ENCODE measurements at regions of chr21 and their contacts with region 1.

Region 1: DNA sequence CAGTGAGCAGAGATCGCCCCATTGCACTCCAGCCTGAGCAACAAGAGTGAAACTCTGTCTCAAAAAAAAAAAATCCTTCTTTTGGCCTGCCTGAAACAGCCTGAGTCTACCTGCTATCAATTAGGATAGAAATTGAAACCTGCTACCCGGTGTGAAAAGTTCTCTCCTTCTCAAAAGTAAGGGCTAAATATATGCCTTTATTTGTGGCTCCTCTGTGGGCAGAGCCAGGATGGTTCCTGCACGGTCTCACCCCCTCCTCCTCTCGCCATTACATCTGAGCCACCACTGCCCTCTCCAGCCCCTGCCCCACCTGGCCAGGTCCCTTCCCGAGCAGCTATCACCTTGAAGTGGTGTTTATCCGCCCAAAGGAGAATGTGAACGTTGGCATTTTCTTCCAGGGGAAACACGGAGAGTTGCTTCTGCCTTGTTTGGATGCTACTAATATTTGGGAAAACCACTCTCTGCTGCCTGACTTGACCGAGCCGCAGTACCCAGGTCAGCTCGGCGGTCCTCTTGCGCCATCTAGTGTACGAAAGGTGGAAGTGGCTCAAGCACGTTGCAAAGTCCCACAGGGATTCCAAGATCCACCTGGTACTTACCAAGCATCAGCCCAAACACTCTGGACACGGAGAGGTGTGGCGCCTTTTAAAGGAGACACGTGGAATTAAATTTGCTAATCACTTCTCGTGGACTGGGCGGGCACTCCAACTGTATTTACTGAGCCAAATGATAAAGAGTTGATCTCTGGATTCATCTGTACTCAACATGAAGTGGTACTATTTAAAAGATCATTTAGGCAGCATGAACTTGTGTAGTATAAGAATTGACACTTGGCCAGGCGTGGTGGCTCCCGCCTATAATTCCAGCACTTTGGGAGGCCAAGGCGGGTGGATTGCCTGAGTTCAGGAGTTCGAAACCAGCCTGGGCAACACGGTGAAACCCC is 31.9 kb downstream of the SETD4 start:
- DNase-seq: peak; percentile 51 to 65 (median 57)
- H3K4me3 ChIP-seq: no peak overlapping the region
- H3K4me3 Mint-ChIP-seq: peak overlapping the region in 1 of 8 donors; percentile 9
- H3K27ac ChIP-seq: no peak overlapping the region
- H3K27ac Mint-ChIP-seq: peak overlapping the region in 2 of 7 donors; percentile 4 to 30
- H3K4me1 ChIP-seq: peaks cover 3% of the 10 kb centered on the region
- H3K4me1 Mint-ChIP-seq: peaks cover 4 to 7% (median 5%) of the 10 kb centered on the region in 4 donors
- H3K27me3 ChIP-seq: no peaks in the 10 kb centered on the region
- H3K27me3 Mint-ChIP-seq: no peaks in the 10 kb centered on the region

Region 2: GRCh38 chr21:34688145-34688544 is 1340.3 kb before region 1 on chr21:
- CTCF ChIA-PET with region 1: interaction called, 34 read pairs
- POLR2A ChIA-PET with region 1: no interaction called
- intact Hi-C with region 1: no loop called
- DNase-seq: peak in 1 of 5 donors; percentile 47
- H3K4me3 ChIP-seq: no peak overlapping the region
- H3K4me3 Mint-ChIP-seq: no peak overlapping the region
- H3K27ac ChIP-seq: no peak overlapping the region
- H3K27ac Mint-ChIP-seq: no peak overlapping the region
- H3K4me1 ChIP-seq: no peaks in the 10 kb centered on the region
- H3K4me1 Mint-ChIP-seq: no peaks in the 10 kb centered on the region
- H3K27me3 ChIP-seq: peaks cover 3% of the 10 kb centered on the region
- H3K27me3 Mint-ChIP-seq: peaks cover 14 to 34% of the 10 kb centered on the region in 2 donors

Region 3: GRCh38 chr21:34693192-34693810 is 1335.1 kb before region 1 on chr21:
- CTCF ChIA-PET with region 1: interaction called, 34 read pairs
- POLR2A ChIA-PET with region 1: no interaction called
- intact Hi-C with region 1: no loop called
- DNase-seq: peak in 4 of 5 donors; percentile 42 to 57 (median 50)
- H3K4me3 ChIP-seq: no peak overlapping the region
- H3K4me3 Mint-ChIP-seq: no peak overlapping the region
- H3K27ac ChIP-seq: no peak overlapping the region
- H3K27ac Mint-ChIP-seq: no peak overlapping the region
- H3K4me1 ChIP-seq: no peaks in the 10 kb centered on the region
- H3K4me1 Mint-ChIP-seq: peaks cover 0 to 4% (median 0%) of the 10 kb centered on the region in 4 donors
- H3K27me3 ChIP-seq: no peaks in the 10 kb centered on the region
- H3K27me3 Mint-ChIP-seq: peaks cover 13 to 27% of the 10 kb centered on the region in 2 donors

Region 4: DNA sequence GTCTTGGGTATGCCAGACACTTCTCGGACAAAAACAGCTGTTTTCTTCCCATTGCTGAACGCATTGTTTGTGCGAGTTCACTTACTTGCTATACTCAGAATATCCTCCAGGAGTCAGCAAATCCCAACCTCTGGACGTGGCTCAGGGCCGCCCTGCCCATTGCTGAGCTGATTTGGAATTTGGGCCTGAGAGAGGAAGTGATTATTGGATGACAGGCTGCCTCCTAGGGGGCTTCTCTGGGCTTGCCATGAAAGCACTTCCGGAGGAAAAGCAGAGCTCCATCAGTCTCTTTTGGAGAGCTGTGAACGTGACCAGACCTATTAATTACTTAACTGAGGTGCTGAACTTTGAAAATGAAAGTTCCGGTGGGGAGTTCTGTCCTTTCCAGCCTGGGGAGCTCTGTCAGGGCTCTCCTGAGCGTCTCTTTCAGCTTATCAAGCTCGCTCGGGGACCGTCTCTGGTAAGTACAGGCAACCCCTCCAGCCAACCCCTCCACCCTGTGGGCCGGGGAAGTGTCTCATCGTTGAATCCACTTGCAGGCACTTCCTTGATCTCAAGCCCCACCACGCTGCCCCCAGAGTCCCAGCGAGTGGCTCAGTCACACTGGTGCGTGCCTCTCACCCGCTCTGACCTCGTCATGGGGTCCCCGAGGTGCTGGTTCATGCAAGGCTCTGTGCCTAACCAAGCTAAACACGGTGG is 1282.7 kb before region 1 on chr21:
- CTCF ChIA-PET with region 1: interaction called, 14 read pairs
- POLR2A ChIA-PET with region 1: no interaction called
- intact Hi-C with region 1: loop called (anchors 1 kb)
- DNase-seq: peak; percentile 43 to 63 (median 53)
- H3K4me3 ChIP-seq: no peak overlapping the region
- H3K4me3 Mint-ChIP-seq: peak overlapping the region in 3 of 8 donors; percentile 17 to 55 (median 50)
- H3K27ac ChIP-seq: no peak overlapping the region
- H3K27ac Mint-ChIP-seq: no peak overlapping the region
- H3K4me1 ChIP-seq: peaks cover 8% of the 10 kb centered on the region
- H3K4me1 Mint-ChIP-seq: peaks cover 0 to 4% (median 2%) of the 10 kb centered on the region in 4 donors
- H3K27me3 ChIP-seq: no peaks in the 10 kb centered on the region
- H3K27me3 Mint-ChIP-seq: peaks cover 7 to 8% of the 10 kb centered on the region in 2 donors

Region 5: DNA sequence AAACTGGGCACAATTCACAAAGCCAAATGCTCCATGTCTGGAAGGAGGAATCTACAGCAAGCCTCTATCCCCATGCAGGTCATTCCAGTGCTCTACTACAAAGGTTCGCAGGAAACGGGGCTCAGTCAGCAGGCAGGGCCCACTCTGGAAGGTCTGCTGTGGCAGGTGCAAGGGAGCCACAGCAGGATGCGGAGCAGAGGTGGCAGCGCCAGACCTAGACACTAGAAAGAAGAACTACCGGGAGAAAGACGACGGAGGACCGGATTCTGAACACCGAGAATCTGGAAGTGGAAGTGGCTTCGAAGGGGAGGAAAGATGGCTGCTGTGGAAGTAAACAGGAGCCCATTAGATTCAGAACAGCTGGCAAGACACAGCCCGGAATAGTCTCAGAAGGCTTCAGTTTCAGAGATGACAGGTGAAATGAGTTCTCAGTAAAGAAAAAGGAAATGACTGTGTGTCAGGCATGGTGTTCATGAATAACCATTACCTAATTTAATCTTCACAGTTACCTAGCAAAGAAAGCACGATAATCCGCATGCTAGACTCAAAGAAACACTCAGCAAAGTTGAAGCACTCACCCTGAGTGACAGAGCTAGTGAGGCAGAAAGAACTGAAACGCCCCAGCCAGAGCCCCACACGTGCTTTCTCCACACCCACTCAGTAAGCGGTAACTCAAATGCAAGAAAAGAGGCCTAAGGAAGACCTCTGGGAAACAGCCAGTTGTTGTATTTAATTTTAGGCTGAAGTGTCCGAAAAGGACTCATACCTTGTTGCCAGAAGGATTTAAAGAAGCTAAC is 10.5 kb after region 1 on chr21:
- CTCF ChIA-PET with region 1: interaction called, 17 read pairs
- POLR2A ChIA-PET with region 1: no interaction called
- intact Hi-C with region 1: no loop called
- DNase-seq: no peak
- H3K4me3 ChIP-seq: no peak overlapping the region
- H3K4me3 Mint-ChIP-seq: no peak overlapping the region
- H3K27ac ChIP-seq: no peak overlapping the region
- H3K27ac Mint-ChIP-seq: peak overlapping the region in 3 of 7 donors; percentile 0 to 66 (median 19)
- H3K4me1 ChIP-seq: no peaks in the 10 kb centered on the region
- H3K4me1 Mint-ChIP-seq: peaks cover 0 to 2% (median 0%) of the 10 kb centered on the region in 4 donors
- H3K27me3 ChIP-seq: no peaks in the 10 kb centered on the region
- H3K27me3 Mint-ChIP-seq: no peaks in the 10 kb centered on the region

Region 6: GRCh38 chr21:36727866-36728265 is 699.5 kb after region 1 on chr21:
- CTCF ChIA-PET with region 1: no interaction called
- POLR2A ChIA-PET with region 1: no interaction called
- intact Hi-C with region 1: no loop called
- DNase-seq: no peak
- H3K4me3 ChIP-seq: no peak overlapping the region
- H3K4me3 Mint-ChIP-seq: no peak overlapping the region
- H3K27ac ChIP-seq: no peak overlapping the region
- H3K27ac Mint-ChIP-seq: no peak overlapping the region
- H3K4me1 ChIP-seq: no peaks in the 10 kb centered on the region
- H3K4me1 Mint-ChIP-seq: no peaks in the 10 kb centered on the region
- H3K27me3 ChIP-seq: no peaks in the 10 kb centered on the region
- H3K27me3 Mint-ChIP-seq: peaks cover 8 to 17% of the 10 kb centered on the region in 2 donors